Posterior vena cava (tissue), 2 donors: ENCODE measurements at regions of chr4 and their contacts with region 1.

Region 1: DNA sequence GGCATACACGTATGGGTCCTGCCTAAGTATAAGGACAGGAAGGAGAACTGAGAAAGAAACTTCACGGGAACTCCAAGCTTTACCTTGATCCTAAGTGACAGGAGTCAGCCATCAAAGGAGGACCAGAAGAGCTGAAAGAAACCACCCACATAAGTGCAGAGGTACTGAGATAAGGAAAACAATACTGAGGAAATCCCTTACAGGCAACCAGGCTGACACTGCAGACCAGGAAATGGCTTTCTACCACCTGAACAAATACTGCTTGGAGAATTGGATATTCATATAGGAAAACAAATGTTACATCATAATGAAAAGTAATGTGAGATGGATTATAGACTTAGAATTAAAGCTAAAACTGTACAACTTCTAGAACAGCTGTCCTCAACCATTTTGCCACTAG is 127.0 kb downstream of the IL15 start:
- DNase-seq: no peak

Region 2: DNA sequence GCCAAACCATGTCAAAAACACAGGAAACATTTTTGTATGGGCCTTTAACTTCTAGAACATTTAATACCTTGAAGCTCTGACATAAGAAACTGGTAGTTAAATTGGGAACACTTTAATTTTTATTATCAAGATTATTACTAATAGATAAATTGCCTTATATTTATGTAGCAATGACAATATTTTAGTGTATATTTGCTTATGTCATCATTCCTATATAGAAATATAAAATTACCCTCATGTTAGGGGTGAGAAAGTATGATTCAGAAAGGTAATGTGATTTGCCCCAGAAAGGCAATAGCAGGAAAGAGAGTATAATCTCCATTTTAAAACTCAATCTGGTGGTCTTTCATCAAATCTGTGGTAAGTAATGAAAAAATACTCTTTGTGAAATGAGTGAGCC is 20.4 kb after region 1 on chr4:
- intact Hi-C with region 1: loop called in 1 of 2 experiments (anchors 1 kb)
- DNase-seq: no peak